Activated T-helper 1 cell treated with anti-CD3 and anti-CD28 coated beads, Interleukin-12 subunit alpha, Interleukin-12 subunit beta, Interleukin-2, Interleukin-4 antibody, amounts not matched to agents 30 ng/mL and 10 ng/mL and 1 ng/mL, durations not matched to agents 14 hours and 24 hours and 36 hours (primary cell): ENCODE measurements at regions of chr1 and their contacts with region 1.

Region 1: GRCh38 chr1:28552758-28553663 is at the start of gene TRNAU1AP:
- DNase-seq: peak; percentile 98
- H3K4me3 Mint-ChIP-seq: peak within 1 kb of the TSS; percentile 99
- H3K27ac Mint-ChIP-seq: peak within 1 kb of the TSS; percentile 97
- H3K4me1 Mint-ChIP-seq: peaks cover 18% of the 10 kb centered on the region
- H3K27me3 Mint-ChIP-seq: no peaks in the 10 kb centered on the region
- total RNA-seq, gene TRNAU1AP: 40.2 and 41.0 TPM in 2 replicates

Region 2: GRCh38 chr1:28359592-28360239 is 193.3 kb before region 1 on chr1:
- intact Hi-C with region 1: loop called (anchors 2 kb)
- DNase-seq: peak; percentile 50
- H3K4me3 Mint-ChIP-seq: no peak overlapping the region
- H3K27ac Mint-ChIP-seq: no peak overlapping the region
- H3K4me1 Mint-ChIP-seq: no peaks in the 10 kb centered on the region
- H3K27me3 Mint-ChIP-seq: peaks cover 3% of the 10 kb centered on the region

Region 3: DNA sequence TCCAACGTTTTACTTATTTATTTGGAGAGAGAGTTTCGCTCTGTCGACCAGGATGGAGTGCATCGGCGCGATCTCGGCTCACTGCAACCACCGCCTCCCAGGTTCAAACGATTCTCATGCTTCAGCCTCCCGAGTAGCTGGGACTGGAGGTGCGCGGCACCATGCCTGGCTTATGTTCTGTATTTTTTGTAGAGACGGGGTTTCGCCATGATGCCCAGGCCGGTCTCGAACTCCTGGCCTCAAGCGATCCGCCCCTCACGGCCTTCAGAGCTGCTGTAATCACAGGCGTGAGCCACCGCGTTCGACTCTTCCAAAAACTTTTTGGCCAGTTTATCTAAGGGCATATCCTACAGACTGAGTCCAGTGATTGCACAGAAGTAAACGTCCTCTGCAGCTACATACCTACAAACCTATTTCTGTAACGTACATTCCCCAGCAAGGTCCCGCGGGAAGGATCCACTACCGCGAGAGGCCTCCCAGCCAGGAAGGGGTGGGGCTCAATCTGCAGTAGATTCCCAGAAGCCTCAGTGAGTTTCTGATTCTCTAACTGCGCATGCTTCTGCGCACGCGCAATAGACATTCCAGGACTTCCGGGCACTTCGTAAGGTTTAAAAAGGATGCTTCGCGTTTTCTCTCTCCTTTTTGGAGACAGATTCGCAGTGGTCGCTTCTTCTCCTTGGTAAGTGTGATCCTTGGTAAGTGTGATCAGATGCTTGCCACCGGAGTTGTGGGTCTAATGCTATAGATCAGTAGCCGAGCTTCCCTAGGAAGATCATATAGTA is 47.4 kb before region 1 on chr1 and contains the start of gene RCC1:
- intact Hi-C with region 1: loop called (anchors 1 kb)
- DNase-seq: peak; percentile 96
- H3K4me3 Mint-ChIP-seq: peak within 1 kb of the TSS; percentile 100
- H3K27ac Mint-ChIP-seq: peak within 1 kb of the TSS; percentile 97
- H3K4me1 Mint-ChIP-seq: peaks cover 32% of the 10 kb centered on the region
- H3K27me3 Mint-ChIP-seq: peaks cover 7% of the 10 kb centered on the region
- total RNA-seq, gene RCC1: 130 and 135 TPM in 2 replicates

Region 4: DNA sequence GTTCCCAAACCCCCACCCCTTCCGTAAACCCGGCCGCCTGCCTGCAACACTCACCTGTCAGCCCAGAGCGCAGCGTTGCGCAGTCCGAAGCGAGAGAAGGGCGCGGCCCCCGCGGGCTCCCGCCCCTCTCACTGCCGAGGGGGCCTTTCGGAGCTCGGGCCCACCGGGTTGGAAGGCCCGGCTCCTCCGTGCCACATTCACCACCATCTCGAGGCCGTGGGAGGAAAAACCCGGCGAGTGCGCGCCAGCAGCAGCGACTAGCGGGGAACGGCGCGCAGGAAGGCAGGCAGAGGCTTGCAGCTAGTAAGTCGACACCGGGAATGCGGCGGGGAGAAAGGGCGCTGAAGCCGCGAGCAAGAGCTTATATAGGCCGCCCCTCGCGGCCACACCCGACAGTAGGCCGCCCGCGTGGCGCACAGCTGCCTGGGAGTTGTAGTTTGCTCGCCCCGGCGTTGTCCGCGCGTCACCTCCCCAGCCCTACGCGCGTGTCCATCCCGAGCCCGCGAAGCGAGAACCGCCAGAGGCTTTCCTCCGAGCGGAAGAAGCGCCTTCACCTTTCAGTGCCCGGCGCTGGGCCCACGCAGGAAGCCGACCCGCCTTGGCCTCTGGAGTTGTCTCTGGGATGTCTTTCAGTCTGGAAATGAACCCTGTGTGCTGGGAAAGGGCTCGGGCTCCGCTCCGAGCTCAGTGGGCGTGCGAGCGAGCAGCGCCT is 28.7 kb after region 1 on chr1:
- intact Hi-C with region 1: loop called (anchors 1 kb)
- DNase-seq: peak; percentile 94
- H3K4me3 Mint-ChIP-seq: peak overlapping the region; percentile 99
- H3K27ac Mint-ChIP-seq: peak overlapping the region; percentile 85
- H3K4me1 Mint-ChIP-seq: peaks cover 31% of the 10 kb centered on the region
- H3K27me3 Mint-ChIP-seq: no peaks in the 10 kb centered on the region

Region 5: GRCh38 chr1:28648474-28649198 is 95.6 kb after region 1 on chr1 and contains the start of gene RNU11:
- intact Hi-C with region 1: loop called (anchors 1 kb)
- DNase-seq: peak; percentile 86
- H3K4me3 Mint-ChIP-seq: peak within 1 kb of the TSS; percentile 92
- H3K27ac Mint-ChIP-seq: peak within 1 kb of the TSS; percentile 100
- H3K4me1 Mint-ChIP-seq: peaks cover 31% of the 10 kb centered on the region
- H3K27me3 Mint-ChIP-seq: peaks cover 2% of the 10 kb centered on the region
- total RNA-seq, gene RNU11: not detected in 2 replicates

Region 6: DNA sequence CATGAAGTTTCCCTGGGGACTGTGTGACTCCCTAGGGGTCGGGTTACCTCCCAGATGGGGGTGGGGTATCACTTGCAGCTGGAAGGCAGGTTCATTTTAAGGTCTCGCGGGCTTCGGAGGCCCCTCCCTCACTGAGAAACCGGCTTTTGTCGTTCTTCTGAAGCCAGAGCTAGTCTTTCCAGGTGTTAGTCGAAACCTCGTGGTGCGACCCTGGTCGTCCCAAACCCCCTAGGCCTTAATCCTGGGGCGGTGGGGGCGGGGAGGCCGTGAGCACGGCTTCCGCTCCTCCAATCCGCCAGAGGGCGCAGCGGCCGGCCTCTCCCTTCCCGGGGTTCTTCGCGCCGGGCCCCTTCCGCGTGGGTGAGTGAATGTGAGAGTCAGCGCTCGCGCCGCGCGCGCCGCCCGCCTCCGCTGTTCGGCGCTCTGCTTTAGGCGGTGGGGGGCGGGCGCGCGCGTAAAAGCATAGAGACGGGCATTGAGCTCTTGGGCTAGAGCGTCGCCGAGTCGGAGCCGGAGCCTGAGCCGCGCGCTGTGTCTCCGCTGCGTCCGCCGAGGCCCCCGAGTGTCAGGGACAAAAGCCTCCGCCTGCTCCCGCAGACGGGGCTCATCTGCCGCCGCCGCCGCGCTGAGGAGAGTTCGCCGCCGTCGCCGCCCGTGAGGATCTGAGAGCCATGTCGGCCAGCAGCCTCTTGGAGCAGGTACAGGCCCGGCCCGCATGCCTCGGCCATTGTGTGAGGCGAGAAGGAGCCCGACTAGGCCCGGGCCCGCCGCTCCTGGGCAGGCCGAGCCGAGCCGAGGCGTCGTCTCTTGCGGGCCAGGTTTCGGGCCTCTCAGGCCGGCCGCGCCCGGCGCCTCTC is 183.7 kb after region 1 on chr1 and contains the start of gene YTHDF2:
- intact Hi-C with region 1: loop called (anchors 1 kb)
- DNase-seq: peak; percentile 96
- H3K4me3 Mint-ChIP-seq: peak within 1 kb of the TSS; percentile 96
- H3K27ac Mint-ChIP-seq: peak within 1 kb of the TSS; percentile 93
- H3K4me1 Mint-ChIP-seq: peaks cover 27% of the 10 kb centered on the region
- H3K27me3 Mint-ChIP-seq: no peaks in the 10 kb centered on the region
- total RNA-seq, gene YTHDF2: 91.7 and 94.9 TPM in 2 replicates